Activated CD4-positive, alpha-beta T cell treated with anti-CD3 and anti-CD28 coated beads for 36 hours (primary cell): ENCODE measurements at regions of chr11 and their contacts with region 1.

Region 1: DNA sequence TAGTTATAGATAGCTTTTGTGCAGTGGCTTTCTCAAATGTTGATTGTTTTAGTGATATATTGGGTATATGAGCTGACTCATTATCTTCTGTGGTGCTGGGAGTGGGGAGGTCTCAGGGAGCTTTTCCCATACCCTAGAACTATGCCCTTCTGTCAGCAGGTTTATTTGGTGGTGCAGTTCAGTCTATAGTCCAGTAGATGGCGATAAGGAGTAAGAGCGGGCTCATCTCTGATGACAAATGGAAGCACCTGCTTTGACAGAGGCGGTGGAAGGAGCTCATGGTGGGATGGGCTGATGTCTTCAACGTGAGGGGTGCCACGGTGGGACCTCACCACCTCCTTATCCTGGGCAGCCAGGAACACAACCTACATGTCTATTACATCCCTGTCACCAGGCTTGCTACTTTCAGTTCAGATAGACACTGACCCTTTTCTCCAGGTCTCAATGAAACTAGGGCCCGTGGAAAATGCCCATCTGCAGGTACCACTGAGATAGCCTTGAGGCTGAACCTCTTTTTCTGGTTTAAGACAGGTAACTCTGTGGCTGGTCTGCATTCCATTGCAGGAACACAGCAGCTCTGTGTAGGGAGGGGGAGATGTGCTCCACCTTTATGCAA is 13.0 kb upstream of the OR6A2 start:
- DNase-seq: peak; percentile 43
- ATAC-seq: peak; percentile 85
- H3K4me3 Mint-ChIP-seq: no peak overlapping the region
- H3K27ac Mint-ChIP-seq: no peak overlapping the region
- H3K4me1 Mint-ChIP-seq: no peaks in the 10 kb centered on the region
- H3K27me3 Mint-ChIP-seq: peaks cover 10% of the 10 kb centered on the region

Region 2: GRCh38 chr11:6790546-6790945 is 22.0 kb before region 1 on chr11:
- CTCF ChIA-PET with region 1: interaction called, 10 read pairs
- POLR2A ChIA-PET with region 1: no interaction called
- intact Hi-C with region 1: no loop called
- DNase-seq: no peak
- ATAC-seq: no peak
- H3K4me3 Mint-ChIP-seq: no peak overlapping the region
- H3K27ac Mint-ChIP-seq: no peak overlapping the region
- H3K4me1 Mint-ChIP-seq: no peaks in the 10 kb centered on the region
- H3K27me3 Mint-ChIP-seq: peaks cover 10% of the 10 kb centered on the region

Region 3: GRCh38 chr11:6825231-6825744 is 12.8 kb after region 1 on chr11:
- CTCF ChIA-PET with region 1: interaction called, 13 read pairs
- POLR2A ChIA-PET with region 1: no interaction called
- intact Hi-C with region 1: no loop called
- DNase-seq: peak; percentile 34
- ATAC-seq: peak; percentile 61
- H3K4me3 Mint-ChIP-seq: no peak overlapping the region
- H3K27ac Mint-ChIP-seq: no peak overlapping the region
- H3K4me1 Mint-ChIP-seq: no peaks in the 10 kb centered on the region
- H3K27me3 Mint-ChIP-seq: peaks cover 10% of the 10 kb centered on the region

Region 4: GRCh38 chr11:6962673-6963072 is 150.2 kb after region 1 on chr11:
- CTCF ChIA-PET with region 1: interaction called, 10 read pairs
- POLR2A ChIA-PET with region 1: no interaction called
- intact Hi-C with region 1: no loop called
- DNase-seq: no peak
- ATAC-seq: no peak
- H3K4me3 Mint-ChIP-seq: no peak overlapping the region
- H3K27ac Mint-ChIP-seq: no peak overlapping the region
- H3K4me1 Mint-ChIP-seq: no peaks in the 10 kb centered on the region
- H3K27me3 Mint-ChIP-seq: no peaks in the 10 kb centered on the region

Region 5: DNA sequence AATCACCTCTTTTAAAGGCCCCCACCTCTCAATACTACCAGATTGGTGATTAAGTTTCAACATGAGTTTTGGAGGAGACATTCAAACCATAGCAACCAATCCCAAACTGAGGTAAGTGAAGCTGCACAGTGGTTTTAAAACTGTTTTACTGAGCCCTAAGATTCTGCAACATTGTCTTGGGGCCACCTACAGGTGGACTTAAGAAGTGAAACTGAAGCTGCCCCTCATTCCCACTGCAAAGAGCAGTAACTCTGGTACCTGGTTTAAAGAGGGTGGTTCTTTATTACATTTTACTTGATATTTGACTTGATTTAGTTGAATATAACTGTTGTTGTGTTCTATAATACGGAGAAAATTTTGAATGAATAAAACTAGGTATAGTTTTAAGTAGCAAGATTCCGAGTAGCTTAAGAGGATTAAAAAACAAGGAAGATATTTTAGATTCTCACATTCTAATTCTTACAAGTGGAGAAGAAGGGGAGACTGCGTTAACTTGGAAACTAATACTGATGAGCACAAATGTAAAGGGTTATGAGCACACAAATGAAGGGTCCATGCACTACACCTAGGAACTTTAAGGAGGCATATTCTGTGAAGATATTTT is 465.9 kb after region 1 on chr11:
- CTCF ChIA-PET with region 1: no interaction called
- POLR2A ChIA-PET with region 1: no interaction called
- intact Hi-C with region 1: loop called in 1 of 2 experiments (anchors 5 kb)
- DNase-seq: peak; percentile 12
- ATAC-seq: no peak
- H3K4me3 Mint-ChIP-seq: no peak overlapping the region
- H3K27ac Mint-ChIP-seq: no peak overlapping the region
- H3K4me1 Mint-ChIP-seq: no peaks in the 10 kb centered on the region
- H3K27me3 Mint-ChIP-seq: peaks cover 16% of the 10 kb centered on the region